A549 (cell line): ENCODE measurements at regions of chr10 and their contacts with region 1.

Region 1: GRCh38 chr10:60208676-60209269 is 180.9 kb downstream of the ANK3 start:
- DNase-seq: peak in 1 of 2 experiments; percentile 59
- ATAC-seq: peak; percentile 60 to 67; a peak in 4 of 6 replicates
- H3K4me3 ChIP-seq: no peak overlapping the region
- H3K27ac ChIP-seq: no peak overlapping the region
- H3K4me1 ChIP-seq: no peaks in the 10 kb centered on the region
- CTCF ChIP-seq: peak; percentile 93
- EP300 ChIP-seq: no peak
- POLR2A ChIP-seq: no peak
- RAD21 ChIP-seq: peak; percentile 94 to 96

Region 2: DNA sequence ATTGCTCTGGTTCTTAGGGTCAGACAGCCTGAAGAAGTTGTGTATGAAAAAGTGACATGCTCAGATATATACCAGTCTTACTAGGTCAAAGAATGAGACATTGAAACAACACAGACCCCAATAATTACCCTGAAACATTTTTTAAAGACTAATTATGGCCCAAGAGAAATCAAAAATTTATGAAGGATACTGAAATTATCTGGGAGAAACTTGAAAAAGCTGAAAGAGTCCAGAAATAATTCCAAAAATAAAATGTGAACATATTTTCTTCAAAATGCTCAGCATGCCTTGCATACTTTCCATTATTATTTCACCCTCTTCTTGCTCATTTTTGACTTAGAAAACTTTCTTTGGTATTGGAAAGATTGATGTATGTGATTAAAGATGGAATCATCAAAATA is 103.5 kb before region 1 on chr10:
- CTCF ChIA-PET with region 1: interaction called, 209 read pairs
- POLR2A ChIA-PET with region 1: no interaction called
- DNase-seq: no peak
- ATAC-seq: no peak
- H3K4me3 ChIP-seq: no peak overlapping the region
- H3K27ac ChIP-seq: no peak overlapping the region
- H3K4me1 ChIP-seq: no peaks in the 10 kb centered on the region; the same call in 1 of the 3 replicates
- CTCF ChIP-seq: no peak
- EP300 ChIP-seq: no peak
- POLR2A ChIP-seq: no peak
- RAD21 ChIP-seq: no peak

Region 3: DNA sequence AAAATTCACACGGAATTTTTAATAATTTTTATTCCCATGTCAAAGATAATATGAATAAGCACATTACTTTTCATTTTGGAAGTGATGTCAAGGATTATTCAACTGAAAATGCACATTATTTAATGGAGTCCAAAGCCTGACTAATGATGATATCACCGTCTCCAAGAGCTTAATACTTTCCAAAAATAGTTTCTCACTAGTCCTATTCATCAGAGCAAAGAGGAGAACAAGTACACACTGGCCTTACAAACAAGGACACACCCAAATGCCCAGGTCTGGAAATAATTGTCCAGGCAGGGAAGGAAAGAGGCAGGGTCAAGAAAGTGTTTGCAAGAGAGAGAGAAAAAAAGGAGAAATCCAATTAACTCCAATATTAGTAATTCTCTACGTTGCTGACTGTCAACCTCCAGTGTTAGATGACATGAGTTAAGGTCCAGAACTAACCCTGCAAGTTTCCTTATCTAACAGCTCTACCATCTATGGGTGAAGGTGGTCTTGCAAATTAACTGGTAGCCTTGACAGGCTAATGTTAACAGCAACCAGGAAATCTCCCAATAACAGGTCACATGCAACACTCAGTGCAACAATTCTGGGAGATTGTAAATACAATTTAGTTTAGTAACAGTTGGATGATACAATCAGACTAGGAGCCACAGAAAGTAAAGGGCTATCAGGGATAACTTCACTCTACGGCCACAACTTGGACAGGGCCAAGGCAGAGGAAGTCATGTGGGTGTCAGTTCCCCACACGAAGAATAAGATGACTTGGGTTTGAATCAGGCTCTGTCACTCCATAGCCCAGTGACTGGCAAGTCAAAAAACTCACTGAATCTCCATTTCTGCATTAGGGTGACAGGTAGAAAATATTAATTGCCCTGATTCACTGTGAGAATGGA is 85.4 kb before region 1 on chr10:
- CTCF ChIA-PET with region 1: interaction called, 147 read pairs
- POLR2A ChIA-PET with region 1: no interaction called
- DNase-seq: peak in 1 of 2 experiments; percentile 71
- ATAC-seq: peak; percentile 71 to 82
- H3K4me3 ChIP-seq: no peak overlapping the region
- H3K27ac ChIP-seq: peak overlapping the region; percentile 2 to 58; a peak in 3 of 6 replicates
- H3K4me1 ChIP-seq: peaks cover 17% of the 10 kb centered on the region
- CTCF ChIP-seq: no peak
- EP300 ChIP-seq: no peak
- POLR2A ChIP-seq: no peak
- RAD21 ChIP-seq: no peak

Region 4: DNA sequence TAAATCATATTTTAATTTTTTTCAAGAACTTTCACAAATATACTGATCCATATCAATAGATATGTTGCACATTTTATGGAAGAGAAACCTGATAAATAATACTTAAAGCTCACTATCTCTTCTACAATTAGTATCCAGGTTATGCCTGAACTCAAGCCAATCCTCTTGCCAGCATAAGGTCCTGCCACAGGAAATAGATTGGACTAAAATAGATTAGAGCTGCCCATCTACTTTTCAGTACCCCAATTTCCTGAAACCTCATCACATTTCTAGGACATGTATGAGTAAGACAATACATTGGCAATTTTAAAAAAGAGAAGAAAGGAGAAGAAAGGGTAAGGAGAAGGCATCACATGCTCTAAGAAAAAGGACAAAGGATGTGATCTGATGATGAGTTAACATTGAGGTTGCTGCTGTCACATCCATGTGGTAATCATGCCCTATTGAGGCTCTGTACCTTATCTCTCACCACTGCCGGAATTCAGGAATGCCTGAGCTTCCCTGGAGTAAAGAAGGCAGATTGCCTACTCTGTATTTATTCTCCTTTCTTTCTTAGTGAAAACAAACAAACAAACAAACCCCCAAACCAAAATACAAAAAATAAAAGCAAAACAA is 18.8 kb before region 1 on chr10:
- CTCF ChIA-PET with region 1: interaction called, 23 read pairs
- POLR2A ChIA-PET with region 1: no interaction called
- DNase-seq: no peak
- ATAC-seq: no peak
- H3K4me3 ChIP-seq: no peak overlapping the region
- H3K27ac ChIP-seq: no peak overlapping the region
- H3K4me1 ChIP-seq: peaks cover 27% of the 10 kb centered on the region
- CTCF ChIP-seq: no peak
- EP300 ChIP-seq: no peak
- POLR2A ChIP-seq: no peak
- RAD21 ChIP-seq: no peak

Region 5: DNA sequence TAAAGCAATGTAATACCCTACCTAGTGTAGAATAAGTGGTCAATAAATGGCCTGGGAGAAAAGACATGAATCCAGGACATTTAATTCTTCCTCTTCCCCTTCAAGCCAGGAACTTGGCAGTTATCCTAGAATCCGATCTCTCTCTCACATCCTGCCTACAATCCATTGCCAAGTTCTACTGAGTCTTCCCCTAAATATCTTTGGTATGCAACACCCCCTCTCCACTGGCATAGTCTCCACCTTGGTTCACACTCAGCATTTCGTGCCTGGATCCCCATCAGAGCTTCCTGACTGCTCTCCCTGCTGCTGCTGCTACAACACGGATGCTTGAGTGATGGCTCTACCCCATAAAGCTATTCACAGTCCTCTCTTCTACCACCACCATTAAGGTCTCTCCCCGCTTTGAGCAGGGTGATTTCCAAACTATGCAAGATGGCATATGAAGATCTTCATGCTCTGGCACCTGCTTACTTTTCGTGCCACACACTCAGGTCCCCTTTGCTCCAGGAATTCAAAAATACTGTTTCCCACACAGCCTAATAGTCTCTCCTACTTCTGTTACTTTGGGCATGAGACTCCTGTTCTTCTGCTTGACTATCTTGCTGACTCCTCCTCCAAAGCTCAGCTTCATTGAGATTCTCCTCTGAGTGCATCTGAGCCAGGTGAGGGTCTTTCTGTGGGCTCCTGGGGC is 176.1 kb after region 1 on chr10:
- CTCF ChIA-PET with region 1: no interaction called
- POLR2A ChIA-PET with region 1: no interaction called
- DNase-seq: peak; percentile 37 to 74
- ATAC-seq: peak; percentile 90 to 96
- H3K4me3 ChIP-seq: no peak overlapping the region; the same call in 2 of the 3 replicates
- H3K27ac ChIP-seq: peak overlapping the region; percentile 69 to 81
- H3K4me1 ChIP-seq: peaks cover 31% of the 10 kb centered on the region
- CTCF ChIP-seq: no peak
- EP300 ChIP-seq: peak; percentile 17 to 51; a peak in 2 of 5 replicates
- POLR2A ChIP-seq: no peak
- RAD21 ChIP-seq: peak; percentile 21 to 32; a peak in 2 of 5 replicates

Region 6: GRCh38 chr10:60444494-60445064 is 235.8 kb after region 1 on chr10:
- CTCF ChIA-PET with region 1: interaction called, 13 read pairs
- POLR2A ChIA-PET with region 1: no interaction called
- DNase-seq: peak in 1 of 2 experiments; percentile 43
- ATAC-seq: no peak
- H3K4me3 ChIP-seq: no peak overlapping the region
- H3K27ac ChIP-seq: no peak overlapping the region
- H3K4me1 ChIP-seq: peaks cover 14% of the 10 kb centered on the region; the same call in 2 of the 3 replicates
- CTCF ChIP-seq: peak; percentile 76
- EP300 ChIP-seq: no peak
- POLR2A ChIP-seq: no peak
- RAD21 ChIP-seq: peak; percentile 87 to 92